A673 (cell line): ENCODE measurements at regions of chr2 and their contacts with region 1.

Region 1: GRCh38 chr2:200713003-200713703 is 98.6 kb upstream of the BZW1 start:
- DNase-seq: peak; percentile 94
- H3K4me3 ChIP-seq: peak overlapping the region; percentile 29
- H3K27ac ChIP-seq: peak overlapping the region; percentile 60
- H3K4me1 ChIP-seq: no peaks in the 10 kb centered on the region
- H3K27me3 ChIP-seq: no peaks in the 10 kb centered on the region
- CTCF ChIP-seq: peak; percentile 80

Region 2: GRCh38 chr2:200735061-200735460 is 21.9 kb after region 1 on chr2:
- CTCF ChIA-PET with region 1: interaction called, 7 read pairs
- POLR2A ChIA-PET with region 1: no interaction called
- intact Hi-C with region 1: loop called (anchors 1 kb)
- DNase-seq: peak; percentile 14
- H3K4me3 ChIP-seq: no peak overlapping the region
- H3K27ac ChIP-seq: no peak overlapping the region
- H3K4me1 ChIP-seq: peaks cover 8% of the 10 kb centered on the region
- H3K27me3 ChIP-seq: peaks cover 4% of the 10 kb centered on the region
- CTCF ChIP-seq: no peak

Region 3: DNA sequence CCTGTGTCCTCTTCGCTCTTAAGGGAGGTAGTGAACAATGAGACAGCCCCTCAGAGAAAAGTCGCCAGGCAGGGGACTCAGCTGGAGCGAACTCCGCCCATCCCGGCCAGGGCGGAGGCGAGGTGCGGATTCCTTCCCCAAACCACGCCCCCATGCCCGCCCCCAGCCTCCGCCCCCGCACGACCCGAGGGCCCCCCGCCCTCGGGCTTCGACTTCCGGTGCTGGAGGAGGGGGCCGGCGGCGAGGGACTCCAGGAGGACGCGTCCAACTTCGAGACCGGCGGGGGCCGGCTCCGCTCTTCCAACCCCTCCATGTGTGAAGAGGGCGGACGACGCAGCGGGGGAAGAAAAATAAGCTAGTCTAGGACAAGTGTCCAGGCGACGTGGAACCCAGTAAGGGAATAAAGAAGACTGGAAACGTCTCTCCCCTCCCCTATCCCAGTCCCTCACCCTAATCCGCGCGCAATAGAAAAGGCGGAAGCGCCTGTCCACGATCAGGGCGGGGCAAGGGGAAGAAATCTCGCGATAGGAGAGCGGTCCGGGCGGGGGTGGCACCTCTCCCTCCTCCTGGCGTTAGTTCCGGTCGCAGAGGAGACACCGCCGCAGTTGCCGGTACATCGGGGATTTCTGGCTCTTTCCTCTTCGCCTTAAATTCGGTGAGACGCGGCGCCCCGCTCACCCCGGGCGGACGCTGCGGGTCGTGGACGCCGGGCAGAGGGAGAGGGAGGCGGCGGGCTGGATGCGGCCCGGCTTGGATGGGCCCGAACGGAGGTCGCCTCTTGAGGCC is 98.4 kb after region 1 on chr2 and contains the start of gene BZW1:
- CTCF ChIA-PET with region 1: no interaction called
- POLR2A ChIA-PET with region 1: no interaction called
- intact Hi-C with region 1: loop called (anchors 2 kb)
- DNase-seq: peak; percentile 98
- H3K4me3 ChIP-seq: peak within 1 kb of the TSS; percentile 95
- H3K27ac ChIP-seq: peak within 1 kb of the TSS; percentile 99
- H3K4me1 ChIP-seq: peaks cover 29% of the 10 kb centered on the region
- H3K27me3 ChIP-seq: no peaks in the 10 kb centered on the region
- CTCF ChIP-seq: no peak
- total RNA-seq, gene BZW1: 321 and 396 TPM in 2 replicates

Region 4: GRCh38 chr2:200888704-200889625 is 175.8 kb after region 1 on chr2 and contains the starts of genes NIF3L1 and PPIL3:
- CTCF ChIA-PET with region 1: no interaction called
- POLR2A ChIA-PET with region 1: no interaction called
- intact Hi-C with region 1: loop called (anchors 1 kb)
- DNase-seq: peak; percentile 100
- H3K4me3 ChIP-seq: peak within 1 kb of the TSS; percentile 61
- H3K27ac ChIP-seq: peak within 1 kb of the TSS; percentile 94
- H3K4me1 ChIP-seq: peaks cover 7% of the 10 kb centered on the region
- H3K27me3 ChIP-seq: no peaks in the 10 kb centered on the region
- CTCF ChIP-seq: no peak; the same call in 1 of the 2 replicates
- total RNA-seq, gene NIF3L1: 56.4 and 56.7 TPM in 2 replicates
- total RNA-seq, gene PPIL3: 37.2 and 48.3 TPM in 2 replicates

Region 5: DNA sequence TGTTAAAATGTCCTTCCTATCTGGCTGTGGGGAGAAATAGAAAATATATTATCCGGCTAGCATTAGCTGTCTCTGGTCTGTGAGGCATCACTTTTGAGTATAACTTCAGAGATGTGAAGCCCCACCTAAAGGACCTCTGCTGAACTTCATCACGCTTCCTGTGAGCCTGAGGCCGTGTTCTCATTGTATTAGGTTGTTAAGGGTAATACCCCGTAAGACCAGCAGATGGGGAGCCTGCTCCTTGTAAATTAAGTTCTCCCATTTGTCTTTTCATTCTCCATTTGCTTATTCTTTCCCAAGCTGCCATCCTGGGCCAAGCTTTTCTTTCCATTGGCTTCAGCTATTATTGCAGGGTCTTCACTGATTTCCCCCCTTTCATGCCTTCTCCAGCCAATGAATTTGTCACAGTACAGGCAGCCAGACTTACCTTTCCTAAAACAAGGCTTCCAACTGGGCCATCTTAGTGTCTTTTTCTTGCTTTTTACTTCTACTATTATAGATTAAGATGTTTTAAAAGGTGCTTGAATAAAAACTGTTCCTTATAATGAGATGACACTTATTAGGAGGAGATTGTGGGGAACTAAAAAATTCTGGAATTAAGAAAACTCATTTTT is 188.4 kb after region 1 on chr2:
- CTCF ChIA-PET with region 1: interaction called, 6 read pairs
- POLR2A ChIA-PET with region 1: no interaction called
- intact Hi-C with region 1: loop called (anchors 1 kb)
- DNase-seq: peak; percentile 92
- H3K4me3 ChIP-seq: no peak overlapping the region
- H3K27ac ChIP-seq: no peak overlapping the region
- H3K4me1 ChIP-seq: no peaks in the 10 kb centered on the region
- H3K27me3 ChIP-seq: no peaks in the 10 kb centered on the region
- CTCF ChIP-seq: peak; percentile 72

Region 6: GRCh38 chr2:201171259-201171814 is 458.2 kb after region 1 on chr2:
- CTCF ChIA-PET with region 1: no interaction called
- POLR2A ChIA-PET with region 1: no interaction called
- intact Hi-C with region 1: loop called (anchors 5 kb)
- DNase-seq: no peak
- H3K4me3 ChIP-seq: no peak overlapping the region
- H3K27ac ChIP-seq: no peak overlapping the region
- H3K4me1 ChIP-seq: no peaks in the 10 kb centered on the region
- H3K27me3 ChIP-seq: no peaks in the 10 kb centered on the region
- CTCF ChIP-seq: no peak